Endothelial cell of umbilical vein (primary cell): ENCODE measurements at regions of chr6 and their contacts with region 1.

Region 1: DNA sequence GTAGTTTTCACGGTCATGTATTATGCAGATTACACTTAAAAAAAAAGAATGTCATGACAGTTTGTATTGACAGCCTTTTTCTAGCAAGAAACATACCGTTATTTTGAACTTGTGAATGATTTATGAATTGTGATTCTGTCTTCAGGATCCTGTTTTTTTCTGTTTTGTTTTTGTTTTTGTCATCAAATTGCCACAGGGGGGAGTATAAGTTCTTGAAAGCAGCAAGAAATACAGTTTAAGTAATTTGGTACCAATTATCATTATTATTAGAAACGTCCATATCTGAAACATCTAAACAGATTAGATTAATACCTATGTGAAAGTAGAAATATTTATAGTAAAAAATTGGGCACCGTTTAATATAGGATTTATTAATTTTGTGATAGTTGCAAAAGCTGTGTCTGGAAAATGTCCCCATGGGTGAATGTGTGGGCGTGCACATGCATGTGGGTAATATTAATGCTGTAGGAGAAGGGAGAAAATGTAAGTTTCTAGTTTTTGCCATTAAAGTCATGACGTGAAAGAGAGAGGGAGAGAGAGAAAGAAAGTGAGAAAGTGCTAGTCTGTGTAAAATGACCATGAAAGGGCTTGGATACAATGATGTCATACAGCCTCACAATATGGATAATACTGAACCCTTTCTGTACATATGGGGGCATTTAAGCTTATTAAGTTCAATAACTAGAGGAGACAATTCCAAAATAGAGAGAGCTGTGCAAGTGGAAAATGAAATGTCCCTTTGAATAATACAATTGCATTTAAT is 9.4 kb upstream of the CCN2 start:
- DNase-seq: peak; percentile 76
- H3K4me3 ChIP-seq: no peak overlapping the region
- H3K27ac ChIP-seq: peak overlapping the region; percentile 19
- H3K4me1 ChIP-seq: peaks cover 11% of the 10 kb centered on the region
- H3K27me3 ChIP-seq: no peaks in the 10 kb centered on the region
- CTCF ChIP-seq: peak in 1 of 2 donors; percentile 12
- POLR2A ChIP-seq: no peak

Region 2: GRCh38 chr6:132161283-132161682 is 200.7 kb after region 1 on chr6:
- CTCF ChIA-PET with region 1: interaction called, 11 read pairs
- POLR2A ChIA-PET with region 1: no interaction called
- dilution Hi-C with region 1: no loop called
- intact Hi-C with region 1: loop called (anchors 1 kb)
- DNase-seq: peak; percentile 70
- H3K4me3 ChIP-seq: no peak overlapping the region
- H3K27ac ChIP-seq: peak overlapping the region; percentile 5
- H3K4me1 ChIP-seq: peaks cover 7% of the 10 kb centered on the region
- H3K27me3 ChIP-seq: no peaks in the 10 kb centered on the region
- CTCF ChIP-seq: peak; percentile 34 to 41
- POLR2A ChIP-seq: no peak